ENCODE measurements at regions of chr16 and their contacts with region 1.

Region 1: DNA sequence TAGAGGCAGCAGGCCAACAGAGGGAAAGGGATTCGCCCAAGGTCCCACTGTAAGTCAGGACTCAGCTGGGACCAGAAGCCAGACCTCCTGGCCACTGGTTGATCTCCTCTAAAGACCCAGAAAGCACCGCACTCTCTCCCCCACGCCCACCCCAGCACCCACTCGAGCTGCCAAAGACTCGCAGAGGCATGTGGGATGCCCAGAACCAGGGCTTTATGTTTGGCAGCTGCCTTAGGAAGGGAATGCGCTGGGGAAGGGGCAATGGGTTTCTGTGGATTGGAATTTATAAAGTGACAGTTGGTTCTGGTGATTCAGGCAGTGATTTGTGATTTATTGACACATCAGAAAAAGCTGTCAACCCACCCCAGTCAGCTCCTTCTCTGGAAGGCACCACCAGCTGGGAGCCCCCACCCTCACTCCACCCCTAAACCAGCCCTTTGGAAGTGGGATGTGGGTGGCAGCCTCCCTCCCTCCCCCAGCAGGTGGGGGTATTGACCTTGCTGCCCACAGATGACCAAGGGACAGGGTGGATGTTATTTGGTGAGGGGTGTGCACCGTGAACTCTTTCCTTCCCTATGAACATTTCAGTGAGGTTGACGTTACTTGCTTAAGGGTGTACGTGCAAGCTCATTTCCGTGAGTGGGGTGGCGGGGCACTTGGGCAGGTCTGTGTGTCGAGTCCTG is 76.6 kb upstream of the DNAJA2 start:
- DNase-seq: no peak
- H3K4me3 ChIP-seq: no peak overlapping the region
- CTCF ChIP-seq: no peak

Region 2: GRCh38 chr16:46961373-46962353 is 88.4 kb before region 1 on chr16:
- in situ Hi-C with region 1: no loop called
- DNase-seq: no peak
- H3K4me3 ChIP-seq: no peak overlapping the region
- CTCF ChIP-seq: no peak

Region 3: DNA sequence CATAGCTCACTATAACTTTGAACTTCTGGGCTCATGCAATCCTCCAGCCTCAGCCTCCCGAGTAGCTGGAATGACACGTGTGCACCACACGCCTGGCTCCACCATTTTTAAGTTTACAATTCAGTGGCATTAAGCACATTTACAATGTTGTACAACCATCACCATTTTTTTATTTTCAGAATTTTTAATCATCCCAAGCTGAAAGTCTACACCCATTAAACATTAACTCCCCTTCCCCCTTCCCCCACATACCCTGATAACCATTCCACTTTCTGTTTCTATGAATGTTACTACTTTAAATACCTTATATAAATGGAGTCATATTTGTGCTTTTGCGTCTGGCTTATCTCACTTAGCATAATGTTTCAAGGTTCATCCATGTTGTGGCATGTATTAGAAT is 75.7 kb after region 1 on chr16:
- in situ Hi-C with region 1: loop called (anchors 5 kb)
- DNase-seq: no peak
- H3K4me3 ChIP-seq: no peak overlapping the region
- CTCF ChIP-seq: no peak